ENCODE measurements at regions of chr2 and their contacts with region 1.

Region 1: GRCh38 chr2:201231781-201232466 is 28.4 kb upstream of the CASP8 start:
- DNase-seq: peak; percentile 95
- ATAC-seq: peak; percentile 54
- H3K4me3 Mint-ChIP-seq: peak overlapping the region; percentile 91
- H3K27ac Mint-ChIP-seq: peak overlapping the region; percentile 88
- H3K4me1 Mint-ChIP-seq: peaks cover 46% of the 10 kb centered on the region
- H3K27me3 Mint-ChIP-seq: no peaks in the 10 kb centered on the region
- CTCF ChIP-seq: peak; percentile 93

Region 2: DNA sequence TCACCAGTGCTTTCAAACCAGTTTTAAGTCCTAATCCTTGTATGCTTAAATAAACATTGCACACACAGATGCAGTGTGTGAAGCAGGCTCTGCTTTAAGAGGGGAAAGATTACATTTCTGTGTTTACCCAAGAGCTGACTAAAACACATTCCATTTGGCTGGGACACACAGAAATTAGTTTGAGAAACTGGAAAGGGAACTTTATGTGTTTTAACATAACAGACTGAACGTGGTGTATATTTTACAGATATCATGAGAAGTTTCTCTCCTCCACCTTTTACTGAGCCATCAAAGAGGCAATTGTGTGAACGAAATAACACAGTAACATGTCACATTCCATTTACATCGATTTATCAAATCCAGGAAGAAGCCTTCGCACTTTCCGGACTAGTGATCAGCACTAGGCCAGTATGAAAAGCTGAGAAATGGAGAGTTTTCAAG is 1154.7 kb before region 1 on chr2:
- CTCF ChIA-PET with region 1: no interaction called
- POLR2A ChIA-PET with region 1: no interaction called
- intact Hi-C with region 1: no loop called
- DNase-seq: no peak
- ATAC-seq: no peak
- H3K4me3 Mint-ChIP-seq: no peak overlapping the region
- H3K27ac Mint-ChIP-seq: no peak overlapping the region
- H3K4me1 Mint-ChIP-seq: no peaks in the 10 kb centered on the region
- H3K27me3 Mint-ChIP-seq: peaks cover 4% of the 10 kb centered on the region
- CTCF ChIP-seq: no peak

Region 3: DNA sequence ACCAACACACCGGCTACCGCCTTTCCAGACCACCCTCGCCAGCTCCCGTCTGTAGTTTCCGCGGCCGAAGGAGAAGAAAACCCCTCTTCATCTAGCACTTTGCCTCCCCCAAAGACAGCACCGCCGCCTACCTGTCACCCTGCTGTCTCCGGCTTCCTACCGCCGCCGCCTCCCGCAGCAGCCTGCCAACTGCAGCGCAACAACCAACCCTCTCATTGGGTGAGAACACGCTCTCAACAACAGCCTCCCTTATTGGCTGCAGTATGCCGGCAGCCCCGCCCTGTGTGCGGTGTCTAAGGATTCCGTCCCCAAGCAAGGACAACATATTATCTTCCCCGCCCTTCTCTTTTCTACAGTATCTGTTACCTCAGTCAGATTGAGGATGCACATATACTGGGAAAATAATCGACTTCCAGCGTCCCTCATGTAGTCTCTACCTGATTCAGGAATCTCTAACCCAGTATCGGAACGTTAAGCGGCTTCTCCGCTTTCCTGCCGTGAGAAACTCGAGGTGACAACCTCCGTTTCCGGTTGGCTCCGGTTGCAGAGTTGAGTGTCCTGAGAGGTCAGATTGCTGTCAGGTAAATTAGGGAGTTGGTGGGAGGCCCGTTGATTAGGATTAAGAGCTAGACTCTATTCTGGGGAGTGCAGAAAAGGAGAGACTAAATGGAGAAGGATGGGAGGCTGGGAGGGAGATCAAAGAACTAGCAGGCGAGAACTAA is 160.3 kb before region 1 on chr2 and contains the starts of genes HYCC2 and NDUFB3:
- CTCF ChIA-PET with region 1: interaction called, 8 read pairs
- POLR2A ChIA-PET with region 1: no interaction called
- intact Hi-C with region 1: loop called (anchors 2 kb)
- DNase-seq: peak; percentile 95
- ATAC-seq: peak; percentile 97
- H3K4me3 Mint-ChIP-seq: peak within 1 kb of the TSS; percentile 90
- H3K27ac Mint-ChIP-seq: peak within 1 kb of the TSS; percentile 93
- H3K4me1 Mint-ChIP-seq: peaks cover 48% of the 10 kb centered on the region
- H3K27me3 Mint-ChIP-seq: no peaks in the 10 kb centered on the region
- CTCF ChIP-seq: no peak
- total RNA-seq, gene HYCC2: 24.7 to 26.9 TPM
- total RNA-seq, gene NDUFB3: 134 to 140 TPM

Region 4: DNA sequence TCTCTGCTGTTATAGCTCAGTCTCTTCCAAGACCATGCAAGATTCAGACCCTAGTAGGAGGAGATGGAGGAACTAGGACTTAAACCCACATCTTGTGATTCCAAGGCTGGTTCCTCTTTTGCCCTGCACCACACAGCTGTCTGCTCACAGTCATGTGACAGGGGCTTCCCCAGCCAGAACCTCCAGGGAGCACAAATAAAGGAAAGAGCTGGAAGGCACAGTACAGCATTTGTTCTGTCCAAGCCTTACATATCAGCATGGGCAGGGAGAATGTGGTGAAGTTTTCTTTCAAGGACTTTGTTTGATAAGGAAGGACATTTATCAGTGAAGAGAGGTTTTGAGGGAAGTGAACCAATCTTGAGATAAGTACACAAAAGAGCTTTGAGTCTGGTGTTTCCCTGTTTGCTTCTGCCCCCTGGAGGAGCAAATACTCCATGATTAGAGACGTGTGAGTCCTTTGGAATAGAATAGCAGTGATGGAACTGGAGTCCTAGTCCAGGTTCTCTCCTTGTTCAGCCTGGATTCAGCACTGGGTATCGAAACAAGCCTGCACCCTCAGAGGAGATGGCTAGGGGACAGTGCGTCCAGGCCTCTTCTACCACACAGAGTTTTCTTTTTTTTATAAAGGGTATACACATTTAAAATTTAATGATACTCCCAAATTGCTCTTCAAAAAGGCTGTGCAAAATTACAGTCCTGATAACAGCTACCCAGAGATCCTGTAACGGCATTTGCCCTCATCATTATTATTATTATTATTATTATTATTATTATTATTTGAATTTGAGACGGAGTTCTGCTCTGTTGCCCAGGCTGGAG is 73.6 kb before region 1 on chr2:
- CTCF ChIA-PET with region 1: interaction called, 18 read pairs
- POLR2A ChIA-PET with region 1: no interaction called
- intact Hi-C with region 1: no loop called
- DNase-seq: peak; percentile 64
- ATAC-seq: peak; percentile 81
- H3K4me3 Mint-ChIP-seq: no peak overlapping the region
- H3K27ac Mint-ChIP-seq: peak overlapping the region; percentile 85
- H3K4me1 Mint-ChIP-seq: peaks cover 24% of the 10 kb centered on the region
- H3K27me3 Mint-ChIP-seq: no peaks in the 10 kb centered on the region
- CTCF ChIP-seq: peak; percentile 65

Region 5: DNA sequence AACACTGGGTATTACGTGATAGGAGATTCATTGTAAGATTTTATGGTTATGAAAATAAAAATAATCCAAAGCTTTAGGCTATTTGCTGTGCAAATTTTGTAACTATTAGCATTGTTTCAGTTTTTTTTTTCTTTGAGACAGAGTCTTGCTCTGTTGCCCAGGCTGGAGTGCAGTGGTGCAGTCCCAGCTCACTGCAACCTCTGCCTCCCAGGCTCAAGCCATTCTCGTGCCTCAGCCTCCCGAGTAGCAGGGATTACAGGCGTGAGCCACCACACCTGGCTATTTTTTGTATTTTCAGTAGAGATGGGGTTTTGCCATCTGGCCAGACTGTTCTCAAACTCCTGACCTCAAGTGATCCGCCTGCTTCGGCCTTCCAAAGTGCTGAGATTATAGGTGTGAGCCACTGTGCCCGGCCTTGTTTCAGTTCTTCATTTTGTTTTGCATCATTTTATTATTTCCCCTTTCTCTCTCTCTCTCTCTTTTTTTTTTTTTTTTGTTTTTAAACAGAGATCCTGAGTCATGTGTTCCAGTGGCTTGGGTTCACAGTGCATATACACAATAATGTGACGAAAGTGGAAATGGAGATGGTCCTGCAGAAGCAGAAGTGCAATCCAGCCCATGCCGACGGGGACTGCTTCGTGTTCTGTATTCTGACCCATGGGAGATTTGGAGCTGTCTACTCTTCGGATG is 23.2 kb before region 1 on chr2:
- CTCF ChIA-PET with region 1: interaction called, 67 read pairs
- POLR2A ChIA-PET with region 1: no interaction called
- intact Hi-C with region 1: no loop called
- DNase-seq: no peak
- ATAC-seq: no peak
- H3K4me3 Mint-ChIP-seq: no peak overlapping the region
- H3K27ac Mint-ChIP-seq: no peak overlapping the region
- H3K4me1 Mint-ChIP-seq: peaks cover 20% of the 10 kb centered on the region
- H3K27me3 Mint-ChIP-seq: no peaks in the 10 kb centered on the region
- CTCF ChIP-seq: no peak

Region 6: DNA sequence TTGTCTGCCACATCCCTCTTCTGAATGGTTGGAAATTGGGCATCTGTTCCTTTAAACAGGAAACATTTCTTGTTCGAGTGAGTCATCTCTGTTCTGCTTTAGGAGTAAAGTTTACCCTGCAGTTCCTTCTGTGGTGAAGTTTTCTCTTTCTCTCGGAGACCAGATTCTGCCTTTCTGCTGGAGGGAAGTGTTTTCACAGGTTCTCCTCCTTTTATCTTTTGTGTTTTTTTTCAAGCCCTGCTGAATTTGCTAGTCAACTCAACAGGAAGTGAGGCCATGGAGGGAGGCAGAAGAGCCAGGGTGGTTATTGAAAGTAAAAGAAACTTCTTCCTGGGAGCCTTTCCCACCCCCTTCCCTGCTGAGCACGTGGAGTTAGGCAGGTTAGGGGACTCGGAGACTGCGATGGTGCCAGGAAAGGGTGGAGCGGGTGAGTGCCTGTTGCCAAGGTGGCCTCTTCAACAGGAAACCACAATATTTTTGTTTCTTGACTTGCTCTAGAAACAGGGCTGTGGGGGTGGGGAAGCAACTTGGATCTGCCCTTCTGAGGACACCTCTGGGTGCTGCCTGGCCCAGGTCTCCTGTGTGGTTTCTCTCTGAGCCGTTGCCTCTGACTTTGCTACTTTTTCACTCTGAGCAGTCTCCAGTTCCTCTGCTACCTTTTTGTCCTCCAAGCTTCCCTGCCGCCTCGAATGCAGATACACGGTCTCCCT is 26.2 kb after region 1 on chr2:
- CTCF ChIA-PET with region 1: interaction called, 91 read pairs
- POLR2A ChIA-PET with region 1: interaction called, 46 read pairs
- intact Hi-C with region 1: loop called (anchors 1 kb)
- DNase-seq: peak; percentile 98
- ATAC-seq: peak; percentile 60
- H3K4me3 Mint-ChIP-seq: peak overlapping the region; percentile 81
- H3K27ac Mint-ChIP-seq: peak overlapping the region; percentile 98
- H3K4me1 Mint-ChIP-seq: peaks cover 74% of the 10 kb centered on the region
- H3K27me3 Mint-ChIP-seq: no peaks in the 10 kb centered on the region
- CTCF ChIP-seq: no peak

Region 7: GRCh38 chr2:201754717-201755415 is 522.9 kb after region 1 on chr2:
- CTCF ChIA-PET with region 1: no interaction called
- POLR2A ChIA-PET with region 1: no interaction called
- intact Hi-C with region 1: no loop called
- DNase-seq: no peak
- ATAC-seq: no peak
- H3K4me3 Mint-ChIP-seq: no peak overlapping the region
- H3K27ac Mint-ChIP-seq: no peak overlapping the region
- H3K4me1 Mint-ChIP-seq: no peaks in the 10 kb centered on the region
- H3K27me3 Mint-ChIP-seq: no peaks in the 10 kb centered on the region
- CTCF ChIP-seq: no peak